ENCODE measurements at regions of chr17 and their contacts with region 1.

Region 1: GRCh38 chr17:82236142-82236981 is 7.5 kb downstream of the SLC16A3 start:
- DNase-seq: peak; percentile 62 to 89
- ATAC-seq: peak; percentile 34
- H3K4me3 ChIP-seq: no peak overlapping the region
- H3K27ac ChIP-seq: no peak overlapping the region
- H3K4me1 ChIP-seq: no peaks in the 10 kb centered on the region
- H3K27me3 ChIP-seq: no peaks in the 10 kb centered on the region

Region 2: DNA sequence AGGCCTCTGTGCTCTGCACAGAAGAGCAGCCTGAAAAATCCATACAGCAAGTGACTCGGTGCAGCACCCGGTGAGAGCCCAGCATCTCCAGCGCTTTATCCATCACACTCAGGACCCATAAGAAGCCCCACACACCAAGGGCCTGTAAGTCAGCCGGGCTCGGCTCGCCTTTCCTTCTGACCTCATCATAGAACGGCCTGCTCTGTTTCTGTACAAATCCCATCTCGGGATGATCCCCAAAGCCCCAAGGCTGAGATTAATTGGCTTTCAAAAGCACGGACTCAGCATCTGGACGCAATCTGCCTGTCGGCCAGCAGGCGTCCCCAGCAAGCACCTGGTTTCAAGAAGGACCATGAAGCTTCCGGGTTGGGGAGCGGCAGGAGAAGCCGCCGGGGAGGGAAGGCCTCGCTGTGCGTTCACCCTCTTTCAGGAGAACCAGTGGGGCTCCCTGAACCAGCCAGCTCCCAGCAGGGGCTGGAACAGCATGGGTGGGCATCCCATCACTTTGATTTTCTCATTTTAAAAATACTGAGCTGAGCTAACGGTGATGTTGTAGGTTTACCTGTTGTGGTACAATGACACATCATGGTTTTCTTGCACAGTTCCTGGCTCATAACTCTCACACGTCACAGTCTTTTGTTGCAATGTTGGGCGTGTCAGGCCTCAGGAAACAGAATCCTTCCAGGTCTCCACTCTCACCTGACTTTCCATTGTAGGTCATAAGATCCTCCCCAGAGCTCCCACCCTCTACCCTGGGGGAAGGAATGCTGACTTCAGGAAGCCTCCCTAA is 30.4 kb before region 1 on chr17:
- intact Hi-C with region 1: loop called in 1 of 2 experiments (anchors 5 kb)
- DNase-seq: peak; percentile 90 to 93
- ATAC-seq: peak; percentile 89
- H3K4me3 ChIP-seq: no peak overlapping the region
- H3K27ac ChIP-seq: no peak overlapping the region
- H3K4me1 ChIP-seq: no peaks in the 10 kb centered on the region
- H3K27me3 ChIP-seq: no peaks in the 10 kb centered on the region

Measured in aorta (tissue), 5 donors.